ENCODE measurements at regions of chr2 and their contacts with region 1.

Region 1: DNA sequence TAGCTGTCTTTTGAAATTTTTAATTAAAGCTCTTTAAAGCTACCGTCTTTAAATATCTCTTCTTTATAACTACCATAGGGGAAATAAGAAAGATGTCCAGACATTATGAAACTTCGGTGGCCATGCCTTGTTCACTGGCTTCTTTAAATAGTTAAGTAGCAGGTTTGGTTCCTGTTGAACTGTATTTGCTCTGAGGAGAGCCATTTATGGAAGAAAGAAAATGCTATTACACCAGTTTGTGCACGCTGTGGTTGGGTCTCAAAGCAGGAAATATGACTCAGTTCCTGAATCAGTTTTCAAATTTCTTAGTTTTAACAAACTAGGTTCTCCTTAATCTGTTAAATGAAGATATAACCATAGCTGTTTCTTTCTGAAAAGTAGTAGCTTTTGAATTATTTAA is 12.2 kb downstream of the ARPC2 start:
- DNase-seq: peak in 8 of 9 donors; percentile 34 to 58 (median 52)
- ATAC-seq: peak; percentile 88
- H3K4me3 ChIP-seq: no peak overlapping the region
- H3K4me3 Mint-ChIP-seq: peak overlapping the region; percentile 10 to 84 (median 76)
- H3K27ac ChIP-seq: peak overlapping the region; percentile 63
- H3K27ac Mint-ChIP-seq: peak overlapping the region; percentile 79 to 93 (median 87)
- H3K4me1 ChIP-seq: peaks cover 48 to 57% of the 10 kb centered on the region in 2 donors
- H3K4me1 Mint-ChIP-seq: peaks cover 64 to 87% (median 77%) of the 10 kb centered on the region in 7 donors
- H3K27me3 ChIP-seq: no peaks in the 10 kb centered on the region
- H3K27me3 Mint-ChIP-seq: no peaks in the 10 kb centered on the region

Region 2: GRCh38 chr2:216507220-216508160 is 1721.7 kb before region 1 on chr2:
- CTCF ChIA-PET with region 1: no interaction called
- POLR2A ChIA-PET with region 1: no interaction called
- intact Hi-C with region 1: loop called in 1 of 2 experiments (anchors 10 kb)
- DNase-seq: no peak
- ATAC-seq: no peak
- H3K4me3 ChIP-seq: no peak overlapping the region
- H3K4me3 Mint-ChIP-seq: no peak overlapping the region
- H3K27ac ChIP-seq: no peak overlapping the region
- H3K27ac Mint-ChIP-seq: peak overlapping the region in 1 of 9 donors; percentile 57
- H3K4me1 ChIP-seq: no peaks in the 10 kb centered on the region
- H3K4me1 Mint-ChIP-seq: peaks cover 4 to 18% (median 11%) of the 10 kb centered on the region in 7 donors
- H3K27me3 ChIP-seq: no peaks in the 10 kb centered on the region
- H3K27me3 Mint-ChIP-seq: no peaks in the 10 kb centered on the region

Region 3: GRCh38 chr2:218245214-218245613 is 16.0 kb after region 1 on chr2:
- CTCF ChIA-PET with region 1: interaction called, 4 read pairs
- POLR2A ChIA-PET with region 1: interaction called, 4 read pairs
- intact Hi-C with region 1: loop called in 1 of 2 experiments (anchors 1 kb)
- DNase-seq: no peak
- ATAC-seq: no peak
- H3K4me3 ChIP-seq: no peak overlapping the region
- H3K4me3 Mint-ChIP-seq: no peak overlapping the region
- H3K27ac ChIP-seq: peak overlapping the region; percentile 18
- H3K27ac Mint-ChIP-seq: peak overlapping the region in 8 of 9 donors; percentile 0 to 85 (median 53)
- H3K4me1 ChIP-seq: peaks cover 4 to 6% of the 10 kb centered on the region in 2 donors
- H3K4me1 Mint-ChIP-seq: peaks cover 0 to 28% (median 22%) of the 10 kb centered on the region in 7 donors
- H3K27me3 ChIP-seq: no peaks in the 10 kb centered on the region
- H3K27me3 Mint-ChIP-seq: no peaks in the 10 kb centered on the region

Region 4: GRCh38 chr2:218345491-218346216 is 116.4 kb after region 1 on chr2:
- CTCF ChIA-PET with region 1: no interaction called
- POLR2A ChIA-PET with region 1: no interaction called
- intact Hi-C with region 1: no loop called
- DNase-seq: no peak
- ATAC-seq: no peak
- H3K4me3 ChIP-seq: no peak overlapping the region
- H3K4me3 Mint-ChIP-seq: no peak overlapping the region
- H3K27ac ChIP-seq: no peak overlapping the region
- H3K27ac Mint-ChIP-seq: peak overlapping the region in 1 of 9 donors; percentile 55
- H3K4me1 ChIP-seq: no peaks in the 10 kb centered on the region
- H3K4me1 Mint-ChIP-seq: no peaks in the 10 kb centered on the region
- H3K27me3 ChIP-seq: no peaks in the 10 kb centered on the region
- H3K27me3 Mint-ChIP-seq: no peaks in the 10 kb centered on the region

Region 5: DNA sequence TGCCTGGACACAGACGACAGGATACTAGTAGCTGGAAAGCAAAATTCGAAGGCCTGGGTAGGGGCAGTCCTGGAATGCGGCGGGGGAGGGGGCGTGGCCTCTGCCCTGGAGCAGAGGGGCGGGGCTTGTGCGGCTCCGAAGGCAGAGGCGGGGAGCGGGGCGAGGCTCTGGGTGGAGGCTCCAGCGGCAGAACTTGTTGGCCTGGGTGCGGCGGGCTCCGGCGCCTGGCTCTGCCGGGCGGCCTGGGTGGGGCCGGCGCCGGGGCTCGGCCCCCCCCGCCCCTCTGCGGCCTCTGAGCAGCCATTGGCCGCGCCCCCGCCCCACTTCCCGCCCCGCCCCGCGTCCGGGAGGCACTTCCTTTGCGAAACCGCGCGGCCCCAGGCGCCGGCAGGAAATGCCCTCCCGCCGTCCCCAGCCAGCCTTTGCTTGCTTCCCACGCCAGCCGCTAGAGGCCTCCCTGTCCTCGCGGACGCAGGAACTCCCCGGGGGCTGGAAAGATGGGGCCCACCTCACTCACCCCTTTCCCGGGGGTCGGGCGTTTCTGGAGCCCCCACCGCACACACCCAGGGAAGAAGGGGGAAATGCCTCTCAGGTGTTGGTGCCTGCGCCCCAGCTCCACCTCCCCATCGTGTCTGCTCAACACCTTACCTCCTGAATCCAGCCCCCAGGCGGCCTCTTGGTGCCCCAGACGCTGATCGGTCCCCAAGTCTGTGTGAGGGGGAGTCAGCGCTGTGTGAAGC is 177.1 kb after region 1 on chr2:
- CTCF ChIA-PET with region 1: no interaction called
- POLR2A ChIA-PET with region 1: no interaction called
- intact Hi-C with region 1: no loop called
- DNase-seq: peak; percentile 75 to 94 (median 85)
- ATAC-seq: peak; percentile 81
- H3K4me3 ChIP-seq: peak overlapping the region; percentile 56
- H3K4me3 Mint-ChIP-seq: peak overlapping the region; percentile 77 to 95 (median 88)
- H3K27ac ChIP-seq: peak overlapping the region; percentile 75
- H3K27ac Mint-ChIP-seq: peak overlapping the region; percentile 83 to 95 (median 91)
- H3K4me1 ChIP-seq: peaks cover 23 to 32% of the 10 kb centered on the region in 2 donors
- H3K4me1 Mint-ChIP-seq: peaks cover 31 to 62% (median 53%) of the 10 kb centered on the region in 7 donors
- H3K27me3 ChIP-seq: no peaks in the 10 kb centered on the region
- H3K27me3 Mint-ChIP-seq: peaks cover 0 to 3% (median 0%) of the 10 kb centered on the region in 5 donors